Naive thymus-derived CD4-positive, alpha-beta T cell (primary cell): ENCODE measurements at regions of chr7 and their contacts with region 1.

Region 1: GRCh38 chr7:66628361-66629140 is at the start of gene KCTD7:
- DNase-seq: peak; percentile 89 to 95 (median 92)
- ATAC-seq: peak; percentile 93
- H3K4me3 ChIP-seq: peak within 1 kb of the TSS; percentile 98
- H3K4me3 Mint-ChIP-seq: peak within 1 kb of the TSS; percentile 82 to 92 (median 89)
- H3K27ac ChIP-seq: peak within 1 kb of the TSS; percentile 91
- H3K27ac Mint-ChIP-seq: peak within 1 kb of the TSS; percentile 65 to 92 (median 89)
- H3K4me1 ChIP-seq: peaks cover 31 to 34% of the 10 kb centered on the region in 2 donors
- H3K4me1 Mint-ChIP-seq: peaks cover 37 to 51% (median 47%) of the 10 kb centered on the region in 7 donors
- H3K27me3 ChIP-seq: no peaks in the 10 kb centered on the region
- H3K27me3 Mint-ChIP-seq: peaks cover 0 to 4% (median 0%) of the 10 kb centered on the region in 5 donors
- total RNA-seq, gene KCTD7: 22.9 to 43.6 (median 33.8) TPM

Region 2: GRCh38 chr7:66075590-66076461 is 552.7 kb before region 1 on chr7 and contains the start of gene ASL:
- CTCF ChIA-PET with region 1: interaction called, 3 read pairs
- POLR2A ChIA-PET with region 1: no interaction called
- intact Hi-C with region 1: loop called in 1 of 2 experiments (anchors 1 kb)
- DNase-seq: peak; percentile 71 to 96 (median 78)
- ATAC-seq: peak; percentile 99
- H3K4me3 ChIP-seq: peak within 1 kb of the TSS; percentile 83
- H3K4me3 Mint-ChIP-seq: peak within 1 kb of the TSS; percentile 80 to 96 (median 87)
- H3K27ac ChIP-seq: peak within 1 kb of the TSS; percentile 69
- H3K27ac Mint-ChIP-seq: peak within 1 kb of the TSS in 8 of 9 donors; percentile 42 to 89 (median 77)
- H3K4me1 ChIP-seq: peaks cover 6 to 7% of the 10 kb centered on the region in 2 donors
- H3K4me1 Mint-ChIP-seq: peaks cover 5 to 20% (median 19%) of the 10 kb centered on the region in 7 donors
- H3K27me3 ChIP-seq: no peaks in the 10 kb centered on the region
- H3K27me3 Mint-ChIP-seq: peaks cover 0 to 2% (median 0%) of the 10 kb centered on the region in 5 donors
- total RNA-seq, gene ASL: 11.3 to 29.7 (median 12.8) TPM

Region 3: GRCh38 chr7:66576646-66577045 is 51.9 kb before region 1 on chr7:
- CTCF ChIA-PET with region 1: no interaction called
- POLR2A ChIA-PET with region 1: no interaction called
- intact Hi-C with region 1: loop called in 1 of 2 experiments (anchors 5 kb)
- DNase-seq: no peak
- ATAC-seq: no peak
- H3K4me3 ChIP-seq: no peak overlapping the region
- H3K4me3 Mint-ChIP-seq: peak overlapping the region in 1 of 10 donors; percentile 14
- H3K27ac ChIP-seq: no peak overlapping the region
- H3K27ac Mint-ChIP-seq: peak overlapping the region in 6 of 9 donors; percentile 17 to 87 (median 72)
- H3K4me1 ChIP-seq: peaks cover 3 to 4% of the 10 kb centered on the region in 2 donors
- H3K4me1 Mint-ChIP-seq: peaks cover 24 to 70% (median 45%) of the 10 kb centered on the region in 7 donors
- H3K27me3 ChIP-seq: no peaks in the 10 kb centered on the region
- H3K27me3 Mint-ChIP-seq: no peaks in the 10 kb centered on the region

Region 4: DNA sequence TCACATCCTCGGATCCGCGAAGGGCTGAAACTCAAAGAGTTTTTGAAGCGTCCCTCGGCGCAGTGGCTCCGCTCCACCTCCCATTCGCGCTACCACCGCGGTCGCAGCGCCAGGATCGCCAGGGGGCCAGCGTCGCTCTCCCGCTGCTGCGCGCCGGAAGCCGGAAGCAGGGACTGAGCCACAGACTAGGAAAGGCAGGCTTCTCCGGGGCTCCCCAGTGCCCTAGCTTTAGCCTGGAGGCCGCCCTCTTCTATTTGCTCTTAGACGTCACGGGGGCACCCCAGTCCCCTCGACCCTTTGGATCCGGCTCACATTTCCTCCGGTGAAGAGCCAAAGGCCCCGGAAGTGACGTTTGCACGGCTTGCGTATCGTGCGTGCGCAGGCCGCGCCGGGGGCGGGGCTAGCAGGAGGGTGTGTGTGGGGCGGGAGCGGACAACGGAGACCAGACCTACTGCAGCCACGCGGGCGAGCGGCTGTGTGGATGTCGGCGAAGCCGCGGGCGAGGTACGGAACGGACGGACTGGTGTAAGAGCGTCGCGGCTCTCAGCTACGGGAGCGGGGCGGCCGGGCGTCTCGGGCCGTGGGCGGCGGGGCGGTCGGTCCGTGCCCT is 25.7 kb after region 1 on chr7:
- CTCF ChIA-PET with region 1: no interaction called
- POLR2A ChIA-PET with region 1: interaction called, 23 read pairs
- intact Hi-C with region 1: loop called (anchors 1 kb)
- DNase-seq: peak; percentile 96 to 99 (median 97)
- ATAC-seq: peak; percentile 95
- H3K4me3 ChIP-seq: peak overlapping the region; percentile 94
- H3K4me3 Mint-ChIP-seq: peak overlapping the region; percentile 91 to 99 (median 98)
- H3K27ac ChIP-seq: peak overlapping the region; percentile 99
- H3K27ac Mint-ChIP-seq: peak overlapping the region; percentile 94 to 99 (median 98)
- H3K4me1 ChIP-seq: peaks cover 8% of the 10 kb centered on the region in 2 donors
- H3K4me1 Mint-ChIP-seq: peaks cover 17 to 56% (median 39%) of the 10 kb centered on the region in 7 donors
- H3K27me3 ChIP-seq: no peaks in the 10 kb centered on the region
- H3K27me3 Mint-ChIP-seq: no peaks in the 10 kb centered on the region

Region 5: GRCh38 chr7:66720561-66720960 is 92.0 kb after region 1 on chr7:
- CTCF ChIA-PET with region 1: no interaction called
- POLR2A ChIA-PET with region 1: no interaction called
- intact Hi-C with region 1: no loop called
- DNase-seq: no peak
- ATAC-seq: no peak
- H3K4me3 ChIP-seq: no peak overlapping the region
- H3K4me3 Mint-ChIP-seq: no peak overlapping the region
- H3K27ac ChIP-seq: no peak overlapping the region
- H3K27ac Mint-ChIP-seq: no peak overlapping the region
- H3K4me1 ChIP-seq: no peaks in the 10 kb centered on the region
- H3K4me1 Mint-ChIP-seq: peaks cover 0 to 1% (median 0%) of the 10 kb centered on the region in 7 donors
- H3K27me3 ChIP-seq: no peaks in the 10 kb centered on the region
- H3K27me3 Mint-ChIP-seq: no peaks in the 10 kb centered on the region

Region 6: GRCh38 chr7:66740302-66740979 is 111.9 kb after region 1 on chr7 and contains the start of gene RABGEF1:
- CTCF ChIA-PET with region 1: no interaction called
- POLR2A ChIA-PET with region 1: interaction called, 4 read pairs
- intact Hi-C with region 1: loop called (anchors 1 kb)
- DNase-seq: peak; percentile 94 to 98 (median 95)
- ATAC-seq: peak; percentile 95
- H3K4me3 ChIP-seq: peak within 1 kb of the TSS; percentile 82
- H3K4me3 Mint-ChIP-seq: peak within 1 kb of the TSS; percentile 89 to 98 (median 94)
- H3K27ac ChIP-seq: peak within 1 kb of the TSS; percentile 84
- H3K27ac Mint-ChIP-seq: peak within 1 kb of the TSS; percentile 94 to 98 (median 96)
- H3K4me1 ChIP-seq: peaks cover 0 to 6% of the 10 kb centered on the region in 2 donors
- H3K4me1 Mint-ChIP-seq: peaks cover 30 to 74% (median 54%) of the 10 kb centered on the region in 7 donors
- H3K27me3 ChIP-seq: no peaks in the 10 kb centered on the region
- H3K27me3 Mint-ChIP-seq: no peaks in the 10 kb centered on the region
- total RNA-seq, gene RABGEF1: 20.7 to 35.7 (median 22.2) TPM